Activated CD8-positive, alpha-beta T cell treated with anti-CD3 and anti-CD28 coated beads for 36 hours (primary cell): ENCODE measurements at regions of chr14 and their contacts with region 1.

Region 1: GRCh38 chr14:105020815-105021655 is at the start of gene CDCA4:
- DNase-seq: peak; percentile 98
- ATAC-seq: peak; percentile 85
- H3K4me3 Mint-ChIP-seq: peak within 1 kb of the TSS; percentile 99
- H3K27ac Mint-ChIP-seq: peak within 1 kb of the TSS; percentile 95
- H3K4me1 Mint-ChIP-seq: peaks cover 65% of the 10 kb centered on the region
- H3K27me3 Mint-ChIP-seq: no peaks in the 10 kb centered on the region
- CTCF ChIP-seq: peak; percentile 10
- total RNA-seq, gene CDCA4: 59.4 to 63.5 TPM

Region 2: DNA sequence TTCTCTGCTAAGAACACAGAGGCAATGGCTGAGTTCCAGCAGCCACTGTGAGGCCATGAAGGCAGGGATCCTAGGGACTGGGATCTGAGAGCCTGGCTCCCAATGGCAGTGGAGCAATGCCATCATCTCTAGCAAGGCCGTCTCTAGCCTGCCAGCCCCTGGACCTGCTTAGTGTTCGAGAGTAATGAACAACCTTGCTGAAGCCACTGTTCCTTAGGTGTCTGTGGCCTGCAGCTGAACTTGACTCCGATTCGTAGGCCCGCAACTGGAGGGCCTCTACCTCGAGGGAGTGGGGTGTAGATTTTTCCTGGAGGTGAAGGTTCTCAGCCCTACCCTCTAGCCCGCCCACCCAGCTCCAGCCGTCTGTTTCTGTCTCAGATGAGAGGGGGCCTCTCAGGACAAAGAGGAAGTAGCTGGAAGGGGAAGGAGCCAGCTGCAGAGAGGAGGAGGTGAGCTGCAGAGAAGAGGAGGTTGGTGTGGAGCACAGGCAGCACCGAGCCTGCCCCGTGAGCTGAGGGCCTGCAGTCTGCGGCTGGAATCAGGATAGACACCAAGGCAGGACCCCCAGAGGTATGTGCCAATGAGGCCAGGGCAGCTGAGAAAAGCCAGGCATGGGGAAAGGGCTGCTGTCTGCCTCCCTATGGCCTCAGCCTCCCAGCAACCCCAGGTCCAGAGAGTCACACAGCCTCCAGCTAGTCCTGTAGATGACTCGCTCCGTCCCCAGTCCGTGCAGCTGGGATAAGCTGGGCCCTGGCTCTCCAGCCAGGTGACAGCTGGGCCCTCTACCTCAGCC is 96.4 kb before region 1 on chr14 and contains the start of gene PLD4:
- CTCF ChIA-PET with region 1: no interaction called
- POLR2A ChIA-PET with region 1: no interaction called
- intact Hi-C with region 1: no loop called
- DNase-seq: no peak
- ATAC-seq: no peak
- H3K4me3 Mint-ChIP-seq: no peak within 1 kb of the TSS
- H3K27ac Mint-ChIP-seq: no peak within 1 kb of the TSS
- H3K4me1 Mint-ChIP-seq: peaks cover 4% of the 10 kb centered on the region
- H3K27me3 Mint-ChIP-seq: no peaks in the 10 kb centered on the region
- CTCF ChIP-seq: no peak
- total RNA-seq, gene PLD4: not detected

Region 3: DNA sequence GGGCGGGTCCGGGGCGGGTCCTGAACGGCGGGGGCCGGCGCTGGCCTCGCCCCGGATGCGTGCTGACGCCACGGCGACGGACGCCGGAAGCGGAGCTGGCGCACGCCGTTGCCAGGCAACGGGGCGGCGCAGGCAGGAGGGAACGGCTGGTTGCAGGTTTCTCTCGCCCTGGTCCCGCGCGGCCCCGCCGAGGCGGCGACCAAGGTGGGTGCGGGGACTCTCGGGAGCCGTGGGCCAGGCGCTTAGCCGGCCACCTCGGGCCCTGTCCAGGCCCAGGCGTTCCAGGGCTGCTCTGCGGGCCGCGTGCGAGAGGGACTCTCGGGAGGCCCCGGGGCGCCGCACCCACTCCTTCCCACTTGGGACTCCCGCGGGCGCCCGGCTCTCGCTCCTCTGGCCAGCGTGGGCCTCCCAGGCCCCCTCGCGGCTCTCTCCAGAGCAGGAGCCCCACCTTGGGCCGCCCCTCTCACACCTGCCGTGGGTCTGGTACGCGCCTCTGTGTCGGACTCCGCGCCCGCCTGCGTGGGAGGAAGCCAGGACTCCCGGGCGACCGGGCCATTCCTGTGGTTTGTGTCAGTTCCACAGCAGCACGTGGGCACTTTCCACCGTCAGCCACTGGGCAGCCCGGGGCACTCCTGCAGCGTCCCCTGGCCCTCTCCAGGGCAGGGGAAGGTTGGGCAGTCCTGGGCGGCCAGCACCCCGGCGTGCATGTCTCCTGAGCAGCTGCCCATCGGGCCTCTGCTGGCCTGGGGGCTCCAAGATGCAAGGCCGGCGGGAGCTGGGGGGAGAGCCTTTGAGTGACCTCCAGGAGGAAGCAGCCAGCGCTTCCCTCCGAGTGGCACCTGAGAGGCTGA is 35.1 kb before region 1 on chr14 and contains the start of gene CLBA1:
- CTCF ChIA-PET with region 1: interaction called, 5 read pairs
- POLR2A ChIA-PET with region 1: interaction called, 24 read pairs
- intact Hi-C with region 1: no loop called
- DNase-seq: peak; percentile 85
- ATAC-seq: peak; percentile 98
- H3K4me3 Mint-ChIP-seq: peak within 1 kb of the TSS; percentile 67
- H3K27ac Mint-ChIP-seq: peak within 1 kb of the TSS; percentile 59
- H3K4me1 Mint-ChIP-seq: peaks cover 3% of the 10 kb centered on the region
- H3K27me3 Mint-ChIP-seq: no peaks in the 10 kb centered on the region
- CTCF ChIP-seq: no peak
- total RNA-seq, gene CLBA1: 0.47 to 0.67 TPM

Region 4: DNA sequence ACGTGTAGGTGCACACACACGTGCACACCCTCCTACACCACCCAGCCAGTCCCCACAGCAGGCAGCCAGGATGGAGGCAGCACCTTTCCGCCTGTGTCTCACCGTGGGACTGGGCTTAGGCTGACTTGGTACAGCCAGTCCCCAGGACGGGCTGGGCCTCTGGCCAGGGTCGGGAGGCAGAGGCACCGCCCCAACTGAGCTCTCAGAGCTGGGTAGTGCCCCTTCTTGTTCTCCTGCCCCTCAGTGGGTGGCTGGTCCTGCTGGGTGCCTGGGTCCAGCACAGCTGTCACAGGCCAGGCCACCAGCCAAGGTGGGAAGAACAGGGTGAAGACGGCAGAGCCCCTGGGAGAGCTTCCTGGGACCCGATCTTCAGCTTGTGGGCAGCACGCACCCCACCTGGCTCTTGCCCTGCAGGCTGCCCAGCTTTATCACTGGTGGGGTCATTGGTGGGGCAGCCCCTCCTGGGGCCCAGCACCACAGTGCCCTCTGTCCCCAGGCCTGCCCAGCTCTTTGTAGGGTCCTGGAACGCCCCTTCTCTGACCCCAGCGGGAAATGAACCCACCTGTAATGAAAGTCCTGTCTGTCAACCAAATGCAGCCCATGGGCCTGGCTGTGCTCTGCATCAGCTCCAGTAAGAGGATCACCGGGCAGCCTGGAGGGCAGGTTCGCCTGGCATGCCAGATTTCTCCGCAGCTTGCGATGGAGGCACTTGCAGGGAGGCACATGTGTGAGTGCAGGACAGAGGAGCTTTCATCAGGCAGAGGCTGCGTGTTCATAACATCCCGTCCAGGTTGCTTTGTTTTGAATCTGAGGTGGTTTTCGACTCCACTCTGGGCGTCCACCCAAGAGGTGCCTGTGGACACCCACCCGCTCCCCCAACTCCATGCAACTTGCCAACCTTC is 14.9 kb before region 1 on chr14:
- CTCF ChIA-PET with region 1: no interaction called
- POLR2A ChIA-PET with region 1: interaction called, 69 read pairs
- intact Hi-C with region 1: no loop called
- DNase-seq: no peak
- ATAC-seq: no peak
- H3K4me3 Mint-ChIP-seq: no peak overlapping the region
- H3K27ac Mint-ChIP-seq: no peak overlapping the region
- H3K4me1 Mint-ChIP-seq: peaks cover 3% of the 10 kb centered on the region
- H3K27me3 Mint-ChIP-seq: no peaks in the 10 kb centered on the region
- CTCF ChIP-seq: no peak

Region 5: GRCh38 chr14:105034314-105035039 is 13.4 kb after region 1 on chr14:
- CTCF ChIA-PET with region 1: no interaction called
- POLR2A ChIA-PET with region 1: interaction called, 12 read pairs
- intact Hi-C with region 1: no loop called
- DNase-seq: no peak
- ATAC-seq: no peak
- H3K4me3 Mint-ChIP-seq: no peak overlapping the region
- H3K27ac Mint-ChIP-seq: no peak overlapping the region
- H3K4me1 Mint-ChIP-seq: peaks cover 12% of the 10 kb centered on the region
- H3K27me3 Mint-ChIP-seq: peaks cover 3% of the 10 kb centered on the region
- CTCF ChIP-seq: no peak

Region 6: DNA sequence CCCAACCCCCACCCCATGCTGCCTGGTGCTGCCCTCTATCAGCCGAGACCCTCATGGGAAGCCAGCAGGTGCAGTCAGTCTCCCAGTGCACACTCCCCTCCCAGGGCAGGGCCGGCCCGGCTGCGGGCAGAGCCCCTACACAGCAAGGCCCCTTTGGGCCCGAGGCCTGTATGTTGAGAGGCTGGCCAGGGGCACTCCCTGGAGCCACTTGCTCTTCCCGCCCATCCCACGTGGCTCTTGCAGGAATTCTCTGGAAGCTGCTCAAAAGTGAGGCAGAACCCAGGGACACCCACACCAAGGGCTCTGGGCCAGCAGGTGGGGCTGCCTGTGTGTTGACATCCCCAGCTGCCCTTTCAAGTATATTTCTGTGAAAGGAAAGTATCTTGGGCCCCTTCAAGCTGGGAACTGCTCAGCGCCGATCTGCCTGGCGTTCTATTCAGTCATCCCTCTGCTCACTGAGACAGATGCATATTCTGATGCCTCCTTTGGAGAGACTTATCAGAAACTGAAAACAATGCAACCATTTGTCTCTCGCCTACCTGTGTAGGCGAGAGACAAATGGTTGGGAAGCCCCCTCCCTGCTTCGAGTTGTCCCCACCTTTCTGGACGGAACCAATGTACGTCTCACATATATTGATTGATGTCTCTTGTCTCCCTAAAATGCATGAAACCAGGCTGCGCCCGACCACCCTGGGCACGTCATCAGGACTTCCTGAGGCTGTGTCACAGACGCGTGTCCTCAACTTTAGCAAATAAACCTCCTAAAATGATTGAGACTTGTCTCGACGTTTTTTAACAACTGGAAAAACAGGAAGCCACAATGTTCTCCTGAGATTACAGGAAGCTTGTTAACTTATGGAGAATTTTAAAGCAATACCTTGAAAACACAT is 38.2 kb after region 1 on chr14:
- CTCF ChIA-PET with region 1: no interaction called
- POLR2A ChIA-PET with region 1: interaction called, 16 read pairs
- intact Hi-C with region 1: no loop called
- DNase-seq: peak; percentile 90
- ATAC-seq: peak; percentile 65
- H3K4me3 Mint-ChIP-seq: peak overlapping the region; percentile 86
- H3K27ac Mint-ChIP-seq: peak overlapping the region; percentile 96
- H3K4me1 Mint-ChIP-seq: peaks cover 50% of the 10 kb centered on the region
- H3K27me3 Mint-ChIP-seq: no peaks in the 10 kb centered on the region
- CTCF ChIP-seq: peak; percentile 34

Region 7: GRCh38 chr14:105065280-105066228 is 44.5 kb after region 1 on chr14 and contains the start of gene GPR132:
- CTCF ChIA-PET with region 1: no interaction called
- POLR2A ChIA-PET with region 1: interaction called, 13 read pairs
- intact Hi-C with region 1: no loop called
- DNase-seq: peak; percentile 96
- ATAC-seq: peak; percentile 74
- H3K4me3 Mint-ChIP-seq: peak within 1 kb of the TSS; percentile 86
- H3K27ac Mint-ChIP-seq: peak within 1 kb of the TSS; percentile 96
- H3K4me1 Mint-ChIP-seq: peaks cover 62% of the 10 kb centered on the region
- H3K27me3 Mint-ChIP-seq: no peaks in the 10 kb centered on the region
- CTCF ChIP-seq: no peak
- total RNA-seq, gene GPR132: 15.1 to 16.4 TPM